Tibial artery (tissue), 4 donors: ENCODE measurements at regions of chr18 and their contacts with region 1.

Region 1: DNA sequence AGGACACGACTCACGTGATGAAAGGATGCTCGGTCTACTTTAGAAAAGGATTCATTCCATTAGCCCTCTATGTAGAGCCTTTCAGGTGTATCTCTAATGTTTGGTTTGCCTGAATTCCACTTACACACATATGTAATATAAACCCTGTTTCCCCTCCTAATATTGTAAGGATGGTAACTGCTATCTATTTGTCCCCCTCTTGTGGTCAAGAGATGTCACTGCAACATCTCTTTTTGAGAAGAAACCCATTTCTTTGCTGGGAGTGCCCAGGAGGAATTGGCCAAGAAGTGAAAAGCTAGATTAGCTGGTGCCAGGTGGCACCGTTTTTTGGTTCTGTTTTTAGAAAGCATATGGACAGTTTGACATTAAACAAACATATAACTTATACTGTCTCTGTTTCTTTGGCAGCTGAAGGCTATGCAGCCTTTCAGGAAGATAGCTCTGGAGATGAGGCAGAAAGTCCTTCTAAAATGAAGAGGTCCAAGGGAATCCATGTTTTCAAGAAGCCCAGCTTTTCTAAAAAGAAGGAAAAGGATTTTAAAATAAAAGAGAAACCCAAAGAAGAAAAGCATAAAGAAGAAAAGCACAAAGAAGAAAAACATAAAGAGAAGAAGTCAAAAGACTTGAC is 41.2 kb downstream of the RALBP1 start:
- DNase-seq: no peak
- H3K4me3 ChIP-seq: no peak overlapping the region
- H3K27ac ChIP-seq: peak overlapping the region in 1 of 2 donors; percentile 18
- H3K4me1 ChIP-seq: peaks cover 0 to 38% (median 17%) of the 10 kb centered on the region in 4 donors
- H3K27me3 ChIP-seq: no peaks in the 10 kb centered on the region
- CTCF ChIP-seq: peak; percentile 68 to 78

Region 2: GRCh38 chr18:9079818-9080528 is 436.6 kb before region 1 on chr18:
- intact Hi-C with region 1: loop called (anchors 10 kb)
- DNase-seq: no peak
- H3K4me3 ChIP-seq: no peak overlapping the region
- H3K27ac ChIP-seq: no peak overlapping the region
- H3K4me1 ChIP-seq: no peaks in the 10 kb centered on the region
- H3K27me3 ChIP-seq: no peaks in the 10 kb centered on the region
- CTCF ChIP-seq: no peak

Region 3: DNA sequence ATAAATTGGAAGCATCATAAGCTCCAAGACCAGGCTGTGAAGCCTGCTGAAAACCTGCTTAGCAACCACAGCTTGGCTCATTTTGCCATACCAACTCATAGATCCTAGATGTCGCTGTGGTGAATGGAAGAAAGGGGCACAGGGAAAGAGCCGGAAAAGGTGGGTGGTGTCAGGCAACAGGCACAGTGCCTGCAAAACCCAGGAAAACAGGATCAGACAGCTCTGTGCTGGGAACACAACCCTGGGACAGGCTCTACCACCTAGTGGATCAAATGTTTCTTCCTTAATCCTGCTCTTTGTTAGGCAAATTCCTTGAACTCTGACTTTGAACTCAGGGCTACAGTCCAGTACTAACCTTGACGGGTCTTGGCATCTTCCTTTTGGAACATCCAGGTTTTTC is 150.4 kb before region 1 on chr18:
- intact Hi-C with region 1: loop called (anchors 10 kb)
- DNase-seq: peak in 1 of 2 donors; percentile 32
- H3K4me3 ChIP-seq: no peak overlapping the region
- H3K27ac ChIP-seq: peak overlapping the region; percentile 48 to 67
- H3K4me1 ChIP-seq: peaks cover 0 to 52% (median 5%) of the 10 kb centered on the region in 4 donors
- H3K27me3 ChIP-seq: no peaks in the 10 kb centered on the region
- CTCF ChIP-seq: peak; percentile 20 to 46

Region 4: GRCh38 chr18:9614401-9615279 is 98.1 kb after region 1 on chr18 and contains the start of gene PPP4R1:
- intact Hi-C with region 1: no loop called
- DNase-seq: peak; percentile 81 to 89
- H3K4me3 ChIP-seq: peak within 1 kb of the TSS; percentile 96 to 98
- H3K27ac ChIP-seq: peak within 1 kb of the TSS; percentile 94 to 99
- H3K4me1 ChIP-seq: peaks cover 0 to 53% (median 21%) of the 10 kb centered on the region in 4 donors
- H3K27me3 ChIP-seq: no peaks in the 10 kb centered on the region
- CTCF ChIP-seq: no peak